GM12878 (cell line): ENCODE measurements at regions of chr3 and their contacts with region 1.

Region 1: DNA sequence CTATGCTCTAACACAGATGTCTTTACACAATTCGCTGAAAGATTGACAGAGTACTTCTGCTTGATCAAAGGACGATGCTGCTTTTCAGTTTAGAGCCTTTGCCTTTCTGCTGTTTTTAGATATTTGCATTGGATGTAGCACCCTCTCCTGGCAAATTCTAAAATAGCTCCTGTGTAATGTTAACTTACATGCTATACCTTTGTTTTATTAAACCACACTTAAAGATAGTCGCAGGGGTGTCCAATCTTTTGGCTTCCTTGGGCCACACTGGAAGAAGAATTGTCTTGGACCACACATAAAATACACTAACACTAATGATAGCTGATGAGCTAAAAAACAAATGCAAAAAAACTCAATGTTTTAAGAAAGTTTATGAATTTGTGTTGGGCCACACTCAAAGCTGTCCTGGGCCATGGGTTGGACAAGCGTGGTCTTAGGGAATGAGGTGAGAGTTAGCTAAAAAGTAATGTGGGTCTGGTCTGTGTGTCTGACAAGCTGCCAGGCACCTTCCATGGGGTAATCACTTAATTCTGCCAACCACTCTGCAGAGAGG is 62.9 kb downstream of the ATG7 start:
- DNase-seq: peak; percentile 5
- ATAC-seq: peak; percentile 87
- H3K4me3 ChIP-seq: no peak overlapping the region
- H3K27ac ChIP-seq: no peak overlapping the region
- H3K4me1 ChIP-seq: no peaks in the 10 kb centered on the region
- H3K27me3 ChIP-seq: no peaks in the 10 kb centered on the region
- CTCF ChIP-seq: peak; percentile 45 to 72 (median 55); a peak in 4 of 6 replicates
- EP300 ChIP-seq: no peak
- POLR2A ChIP-seq: no peak
- RAD21 ChIP-seq: peak; percentile 83

Region 2: DNA sequence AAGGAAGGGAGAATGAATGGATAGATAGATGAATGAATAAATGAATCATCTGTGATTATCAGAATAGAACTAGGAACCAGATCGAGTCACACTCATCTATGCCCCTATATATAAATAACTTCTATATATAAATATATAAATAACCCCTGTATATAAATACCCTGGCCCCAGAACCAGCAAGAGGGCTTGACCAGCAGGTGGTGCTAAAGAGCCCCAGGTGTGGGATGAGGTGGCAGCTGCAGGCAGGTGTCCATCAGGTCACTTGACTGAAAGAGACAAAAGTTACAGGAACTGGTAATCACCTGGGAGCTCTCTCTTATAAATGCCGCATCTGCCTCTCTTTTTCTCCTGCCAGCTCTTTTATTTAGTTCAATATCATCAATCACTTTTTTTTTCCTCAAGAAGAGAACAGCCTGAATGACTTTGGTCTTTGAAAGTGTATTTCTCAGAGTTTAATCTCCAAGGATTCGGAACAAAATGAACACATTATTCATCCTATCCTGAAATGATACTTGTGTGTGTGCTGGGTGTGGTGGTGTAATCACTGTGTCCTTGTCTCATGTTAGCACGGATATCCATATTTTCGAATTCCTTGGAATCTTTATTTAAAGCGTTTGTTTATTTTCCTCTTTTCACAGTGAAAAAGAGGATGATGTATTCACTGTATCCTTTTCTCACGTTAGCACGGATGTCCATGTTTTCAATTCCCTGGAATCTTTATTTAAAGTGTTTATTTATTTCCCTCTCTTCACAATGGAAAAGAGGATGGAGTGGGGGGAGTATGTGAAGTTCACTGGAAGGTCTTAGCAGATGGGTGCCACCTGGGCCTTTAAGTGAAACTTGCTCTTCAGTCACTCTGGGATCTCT is 98.3 kb before region 1 on chr3:
- CTCF ChIA-PET with region 1: interaction called, 116 read pairs
- POLR2A ChIA-PET with region 1: interaction called, 3 read pairs
- RAD21 ChIA-PET with region 1: interaction called, 54 read pairs
- SMC1A ChIA-PET with region 1: interaction called, 66 read pairs
- in situ Hi-C with region 1: loop called (anchors 5 kb)
- intact Hi-C with region 1: loop called (anchors 1 kb)
- DNase-seq: no peak
- ATAC-seq: peak; percentile 96
- H3K4me3 ChIP-seq: no peak overlapping the region
- H3K27ac ChIP-seq: no peak overlapping the region
- H3K4me1 ChIP-seq: no peaks in the 10 kb centered on the region
- H3K27me3 ChIP-seq: no peaks in the 10 kb centered on the region
- CTCF ChIP-seq: peak; percentile 60 to 85 (median 70)
- EP300 ChIP-seq: no peak
- POLR2A ChIP-seq: no peak
- RAD21 ChIP-seq: peak; percentile 87

Region 3: GRCh38 chr3:11250902-11251813 is 84.0 kb before region 1 on chr3:
- CTCF ChIA-PET with region 1: interaction called, 13 read pairs
- POLR2A ChIA-PET with region 1: no interaction called
- RAD21 ChIA-PET with region 1: interaction called, 12 read pairs
- SMC1A ChIA-PET with region 1: interaction called, 3 read pairs
- in situ Hi-C with region 1: no loop called
- intact Hi-C with region 1: loop called (anchors 5 kb)
- DNase-seq: no peak
- ATAC-seq: no peak
- H3K4me3 ChIP-seq: no peak overlapping the region
- H3K27ac ChIP-seq: no peak overlapping the region
- H3K4me1 ChIP-seq: no peaks in the 10 kb centered on the region
- H3K27me3 ChIP-seq: peaks cover 0 to 2% of the 10 kb centered on the region in 2 experiments; a peak in 1 of 4 replicates
- CTCF ChIP-seq: no peak
- EP300 ChIP-seq: no peak
- POLR2A ChIP-seq: no peak
- RAD21 ChIP-seq: no peak

Region 4: DNA sequence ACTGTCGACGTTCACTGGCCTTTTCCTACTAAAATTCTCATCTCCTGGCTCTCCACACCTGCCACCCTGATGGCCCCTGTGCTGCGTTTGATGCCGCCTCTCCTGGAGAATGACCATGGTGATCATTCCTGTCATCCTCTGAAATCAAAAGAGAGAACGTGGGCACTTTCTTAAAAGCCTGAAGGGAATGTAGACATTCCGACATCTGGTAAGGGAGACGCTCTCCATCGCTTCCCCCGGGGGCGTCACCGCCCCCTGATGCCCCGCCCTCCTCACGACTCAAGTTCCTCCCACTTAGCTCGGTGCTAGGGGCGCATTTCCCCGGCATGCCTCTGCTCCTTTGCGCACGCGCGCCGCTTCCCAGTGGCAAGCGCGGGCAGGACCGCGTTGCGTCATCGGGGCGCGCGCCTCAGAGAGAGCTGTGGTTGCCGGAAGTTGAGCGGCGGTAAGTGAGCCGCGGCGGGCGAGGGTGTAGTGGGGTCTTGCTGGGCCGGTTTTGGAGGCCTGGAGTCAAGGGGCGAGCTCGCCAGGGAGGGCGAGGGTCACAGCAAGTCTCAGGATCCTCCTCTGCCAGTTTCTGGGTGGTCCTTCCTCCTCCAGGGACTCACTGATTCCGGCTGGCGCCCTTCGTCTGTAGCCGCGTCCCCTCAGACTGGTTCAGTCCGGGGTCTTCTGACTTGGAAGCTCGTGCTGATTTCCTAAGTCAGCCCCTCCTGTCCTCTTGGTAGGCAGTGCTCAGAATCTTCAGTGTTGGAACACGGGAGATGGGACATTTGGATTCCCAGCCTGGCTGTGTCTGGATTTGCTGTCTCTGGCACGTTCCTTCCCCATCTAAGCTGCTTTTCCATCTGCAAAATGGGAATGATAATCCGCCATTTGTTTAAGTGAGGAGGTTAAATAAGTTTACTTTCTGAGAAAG is 62.9 kb before region 1 on chr3 and contains the start of gene ATG7:
- CTCF ChIA-PET with region 1: interaction called, 10 read pairs
- POLR2A ChIA-PET with region 1: no interaction called
- RAD21 ChIA-PET with region 1: interaction called, 8 read pairs
- SMC1A ChIA-PET with region 1: interaction called, 3 read pairs
- in situ Hi-C with region 1: no loop called
- intact Hi-C with region 1: no loop called
- DNase-seq: peak; percentile 82
- ATAC-seq: peak; percentile 99
- H3K4me3 ChIP-seq: peak within 1 kb of the TSS; percentile 99
- H3K27ac ChIP-seq: peak within 1 kb of the TSS; percentile 88
- H3K4me1 ChIP-seq: peaks cover 7% of the 10 kb centered on the region
- H3K27me3 ChIP-seq: no peaks in the 10 kb centered on the region
- CTCF ChIP-seq: no peak
- EP300 ChIP-seq: no peak
- POLR2A ChIP-seq: peak; percentile 95
- RAD21 ChIP-seq: no peak
- polyA plus RNA-seq, gene ATG7: 13.5 to 18.0 TPM

Region 5: GRCh38 chr3:11323813-11324212 is 11.3 kb before region 1 on chr3:
- CTCF ChIA-PET with region 1: interaction called, 27 read pairs
- POLR2A ChIA-PET with region 1: no interaction called
- RAD21 ChIA-PET with region 1: interaction called, 11 read pairs
- SMC1A ChIA-PET with region 1: interaction called, 6 read pairs
- in situ Hi-C with region 1: no loop called
- intact Hi-C with region 1: no loop called
- DNase-seq: no peak
- ATAC-seq: no peak
- H3K4me3 ChIP-seq: no peak overlapping the region
- H3K27ac ChIP-seq: no peak overlapping the region
- H3K4me1 ChIP-seq: no peaks in the 10 kb centered on the region
- H3K27me3 ChIP-seq: no peaks in the 10 kb centered on the region
- CTCF ChIP-seq: no peak
- EP300 ChIP-seq: no peak
- POLR2A ChIP-seq: no peak
- RAD21 ChIP-seq: no peak

Region 6: DNA sequence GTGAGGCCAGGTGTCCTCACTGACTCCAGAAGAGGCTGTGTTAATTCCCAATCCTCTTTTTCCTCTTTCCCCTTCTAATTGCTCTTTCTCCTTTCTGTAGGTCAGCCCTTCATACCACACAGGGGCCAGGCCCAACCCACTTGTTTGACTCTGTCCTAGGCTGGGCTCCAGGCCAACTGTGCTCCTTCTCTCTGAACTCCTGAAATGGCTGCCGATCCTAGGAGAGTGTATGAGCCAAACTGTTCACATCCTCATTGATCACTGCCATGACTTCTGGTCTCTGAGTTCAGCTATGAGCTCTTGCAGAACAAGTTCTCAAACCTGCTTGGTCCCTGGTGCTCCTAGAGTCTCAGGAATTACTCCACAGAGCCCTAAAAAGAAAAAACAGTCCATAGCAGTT is 163.5 kb after region 1 on chr3:
- CTCF ChIA-PET with region 1: no interaction called
- POLR2A ChIA-PET with region 1: no interaction called
- RAD21 ChIA-PET with region 1: no interaction called
- SMC1A ChIA-PET with region 1: no interaction called
- in situ Hi-C with region 1: no loop called
- intact Hi-C with region 1: no loop called
- DNase-seq: no peak
- ATAC-seq: no peak
- H3K4me3 ChIP-seq: no peak overlapping the region
- H3K27ac ChIP-seq: no peak overlapping the region
- H3K4me1 ChIP-seq: no peaks in the 10 kb centered on the region
- H3K27me3 ChIP-seq: no peaks in the 10 kb centered on the region
- CTCF ChIP-seq: no peak
- EP300 ChIP-seq: no peak
- POLR2A ChIP-seq: no peak
- RAD21 ChIP-seq: no peak

Region 7: GRCh38 chr3:11651900-11652299 is 316.8 kb after region 1 on chr3:
- CTCF ChIA-PET with region 1: interaction called, 22 read pairs
- POLR2A ChIA-PET with region 1: no interaction called
- RAD21 ChIA-PET with region 1: interaction called, 22 read pairs
- SMC1A ChIA-PET with region 1: interaction called, 30 read pairs
- in situ Hi-C with region 1: no loop called
- intact Hi-C with region 1: no loop called
- DNase-seq: no peak
- ATAC-seq: no peak
- H3K4me3 ChIP-seq: no peak overlapping the region
- H3K27ac ChIP-seq: no peak overlapping the region
- H3K4me1 ChIP-seq: no peaks in the 10 kb centered on the region
- H3K27me3 ChIP-seq: no peaks in the 10 kb centered on the region
- CTCF ChIP-seq: peak in 2 of 3 experiments; percentile 23 to 52; a peak in 3 of 6 replicates
- EP300 ChIP-seq: no peak
- POLR2A ChIP-seq: no peak
- RAD21 ChIP-seq: peak; percentile 66